GM18951 (cell line): ENCODE measurements at regions of chrX and their contacts with region 1.

Region 1: GRCh38 chrX:148080593-148080992 is 99.5 kb downstream of the FMR1NB start:
- POLR2A ChIP-seq: no peak

Region 2: GRCh38 chrX:149470955-149471354 is 1390.4 kb after region 1 on chrX:
- in situ Hi-C with region 1: loop called (anchors 25 kb)
- POLR2A ChIP-seq: no peak